MCF 10A (cell line): ENCODE measurements at regions of chrX and their contacts with region 1.

Region 1: GRCh38 chrX:48539345-48540027 is at the start of gene TBC1D25:
- DNase-seq: peak; percentile 96
- H3K4me3 Mint-ChIP-seq: peak within 1 kb of the TSS; percentile 83
- H3K27ac Mint-ChIP-seq: peak within 1 kb of the TSS; percentile 87
- H3K4me1 Mint-ChIP-seq: peaks cover 11% of the 10 kb centered on the region
- H3K27me3 Mint-ChIP-seq: no peaks in the 10 kb centered on the region
- CTCF ChIP-seq: peak; percentile 42
- total RNA-seq, gene TBC1D25: 14.4 and 18.2 TPM in 2 replicates

Region 2: DNA sequence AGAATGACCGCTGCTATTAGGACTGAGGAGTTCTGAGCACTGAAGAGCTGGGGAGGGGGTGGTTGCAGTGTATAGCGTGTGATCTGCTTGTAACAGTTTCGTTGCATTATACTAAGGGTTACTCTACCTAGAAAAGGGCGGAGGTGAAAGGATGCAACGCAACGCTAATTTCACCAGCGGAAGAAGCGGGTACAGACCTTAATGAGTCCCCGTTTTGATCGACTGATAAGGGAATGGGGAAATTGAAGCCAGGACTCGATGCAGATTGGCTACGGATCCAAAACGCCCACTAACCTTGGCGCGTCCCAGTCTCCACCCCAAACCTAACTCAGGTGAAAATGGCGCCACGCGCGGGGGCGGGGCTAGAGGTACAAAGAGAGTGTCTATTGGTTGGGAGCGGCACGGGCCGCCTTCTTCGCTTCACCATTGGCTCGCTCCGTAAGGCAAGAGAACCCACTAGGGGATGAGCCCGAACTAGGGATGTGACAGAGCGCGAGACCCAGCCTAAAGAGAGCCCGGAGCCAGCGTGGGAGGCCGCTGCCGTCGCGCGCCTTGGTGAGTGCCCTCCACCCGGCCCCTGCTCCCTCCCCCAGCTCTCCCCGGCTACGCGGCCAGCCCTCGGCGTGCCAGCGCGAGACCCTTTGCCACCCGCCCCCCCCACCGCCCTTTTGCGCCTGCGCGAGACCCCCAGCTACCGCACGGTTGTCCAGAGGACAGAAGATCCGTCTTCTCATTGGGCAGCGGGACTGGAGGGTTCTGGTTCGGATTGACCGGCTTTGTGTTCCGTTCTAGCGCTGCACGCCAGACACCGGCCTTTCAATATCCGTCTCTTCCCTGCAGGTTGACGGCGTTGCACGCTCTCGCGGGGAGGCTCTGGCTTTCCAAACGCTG is 17.9 kb before region 1 on chrX and contains the start of gene EBP:
- CTCF ChIA-PET with region 1: interaction called, 3 read pairs
- POLR2A ChIA-PET with region 1: interaction called, 15 read pairs
- intact Hi-C with region 1: no loop called
- DNase-seq: peak; percentile 95
- H3K4me3 Mint-ChIP-seq: peak within 1 kb of the TSS; percentile 77
- H3K27ac Mint-ChIP-seq: peak within 1 kb of the TSS; percentile 57
- H3K4me1 Mint-ChIP-seq: no peaks in the 10 kb centered on the region
- H3K27me3 Mint-ChIP-seq: no peaks in the 10 kb centered on the region
- CTCF ChIP-seq: no peak
- total RNA-seq, gene EBP: 66.9 and 102 TPM in 2 replicates

Region 3: GRCh38 chrX:49184294-49185061 is 645.0 kb after region 1 on chrX:
- CTCF ChIA-PET with region 1: no interaction called
- POLR2A ChIA-PET with region 1: no interaction called
- intact Hi-C with region 1: no loop called
- DNase-seq: peak; percentile 94
- H3K4me3 Mint-ChIP-seq: peak overlapping the region; percentile 75
- H3K27ac Mint-ChIP-seq: no peak overlapping the region
- H3K4me1 Mint-ChIP-seq: peaks cover 11% of the 10 kb centered on the region
- H3K27me3 Mint-ChIP-seq: no peaks in the 10 kb centered on the region
- CTCF ChIP-seq: no peak